Naive thymus-derived CD4-positive, alpha-beta T cell (primary cell): ENCODE measurements at regions of chr11 and their contacts with region 1.

Region 1: GRCh38 chr11:129695575-129696308 is 119.9 kb upstream of the TMEM45B start:
- DNase-seq: peak; percentile 43 to 75 (median 68)
- ATAC-seq: peak; percentile 88
- H3K4me3 ChIP-seq: peak overlapping the region; percentile 72
- H3K4me3 Mint-ChIP-seq: peak overlapping the region; percentile 71 to 89 (median 85)
- H3K27ac ChIP-seq: peak overlapping the region; percentile 58
- H3K27ac Mint-ChIP-seq: peak overlapping the region in 6 of 9 donors; percentile 12 to 83 (median 22)
- H3K4me1 ChIP-seq: peaks cover 0 to 6% of the 10 kb centered on the region in 2 donors
- H3K4me1 Mint-ChIP-seq: peaks cover 0 to 12% (median 5%) of the 10 kb centered on the region in 7 donors
- H3K27me3 ChIP-seq: no peaks in the 10 kb centered on the region
- H3K27me3 Mint-ChIP-seq: peaks cover 0 to 10% (median 5%) of the 10 kb centered on the region in 5 donors

Region 2: GRCh38 chr11:128884703-128885338 is 810.9 kb before region 1 on chr11:
- CTCF ChIA-PET with region 1: no interaction called
- POLR2A ChIA-PET with region 1: no interaction called
- intact Hi-C with region 1: loop called in 1 of 2 experiments (anchors 10 kb)
- DNase-seq: peak in 8 of 9 donors; percentile 41 to 69 (median 60)
- ATAC-seq: peak; percentile 79
- H3K4me3 ChIP-seq: no peak overlapping the region
- H3K4me3 Mint-ChIP-seq: no peak overlapping the region
- H3K27ac ChIP-seq: no peak overlapping the region
- H3K27ac Mint-ChIP-seq: no peak overlapping the region
- H3K4me1 ChIP-seq: no peaks in the 10 kb centered on the region
- H3K4me1 Mint-ChIP-seq: peaks cover 0 to 8% (median 3%) of the 10 kb centered on the region in 7 donors
- H3K27me3 ChIP-seq: peaks cover 7 to 9% of the 10 kb centered on the region in 2 donors
- H3K27me3 Mint-ChIP-seq: peaks cover 54 to 78% (median 73%) of the 10 kb centered on the region in 5 donors

Region 3: DNA sequence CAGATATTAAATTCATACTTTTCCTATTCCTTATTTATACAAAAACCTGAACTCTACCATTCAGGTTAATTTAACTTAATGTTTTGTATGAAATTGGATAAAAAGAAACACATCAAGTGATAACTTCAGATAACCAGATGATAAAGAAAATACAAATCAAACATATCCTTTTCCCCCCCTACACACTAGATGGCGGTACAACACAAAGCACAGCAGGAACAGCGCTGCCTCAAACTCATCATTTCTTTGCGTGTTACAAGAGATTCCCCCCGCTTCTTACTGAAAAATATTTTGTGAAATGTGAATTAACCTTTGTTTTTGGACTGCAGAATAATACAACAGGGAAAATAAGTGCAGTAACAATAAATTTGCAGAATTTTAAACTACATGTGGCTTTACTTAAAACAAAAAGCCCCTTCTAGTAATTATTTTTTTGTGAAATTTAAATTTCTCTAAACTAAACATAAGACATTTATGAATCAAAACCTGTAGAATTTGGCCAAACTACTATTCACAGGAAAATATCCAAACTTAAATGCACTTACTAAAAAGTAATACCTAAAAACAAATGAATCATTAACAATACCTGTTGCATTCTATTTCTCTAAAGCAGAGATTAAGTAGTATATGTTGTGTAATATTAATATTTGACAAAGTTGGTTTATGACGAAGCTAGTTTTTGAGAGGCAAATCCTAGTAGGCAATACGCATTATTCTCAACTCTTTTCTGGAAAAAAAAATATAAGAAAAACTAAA is 578.0 kb before region 1 on chr11:
- CTCF ChIA-PET with region 1: interaction called, 3 read pairs
- POLR2A ChIA-PET with region 1: no interaction called
- intact Hi-C with region 1: loop called (anchors 1 kb)
- DNase-seq: peak in 7 of 9 donors; percentile 38 to 74 (median 62)
- ATAC-seq: peak; percentile 78
- H3K4me3 ChIP-seq: no peak overlapping the region
- H3K4me3 Mint-ChIP-seq: no peak overlapping the region
- H3K27ac ChIP-seq: no peak overlapping the region
- H3K27ac Mint-ChIP-seq: no peak overlapping the region
- H3K4me1 ChIP-seq: no peaks in the 10 kb centered on the region
- H3K4me1 Mint-ChIP-seq: peaks cover 0 to 2% (median 0%) of the 10 kb centered on the region in 7 donors
- H3K27me3 ChIP-seq: no peaks in the 10 kb centered on the region
- H3K27me3 Mint-ChIP-seq: peaks cover 0 to 5% (median 0%) of the 10 kb centered on the region in 5 donors

Region 4: DNA sequence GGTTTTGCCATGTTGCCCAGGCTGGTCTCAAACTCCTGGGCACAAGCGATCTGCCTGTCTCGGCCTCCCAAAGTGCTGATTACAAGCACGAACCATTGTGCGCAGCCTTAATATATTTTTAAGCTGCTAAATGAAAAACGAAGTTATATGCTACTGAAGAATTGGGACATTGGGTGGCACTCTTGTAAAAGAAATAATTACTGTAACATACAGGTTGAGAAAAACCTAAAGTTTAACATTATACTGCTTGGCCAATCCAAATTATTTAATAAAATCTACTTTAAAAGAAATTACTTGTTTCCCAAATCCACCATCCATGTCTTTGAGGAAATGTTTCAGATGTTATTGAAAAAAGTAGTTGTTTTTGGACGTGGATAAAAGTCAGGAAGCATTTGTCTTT is 465.7 kb before region 1 on chr11:
- CTCF ChIA-PET with region 1: interaction called, 3 read pairs
- POLR2A ChIA-PET with region 1: no interaction called
- intact Hi-C with region 1: loop called in 1 of 2 experiments (anchors 1 kb)
- DNase-seq: peak in 3 of 9 donors; percentile 2 to 36 (median 15)
- ATAC-seq: no peak
- H3K4me3 ChIP-seq: no peak overlapping the region
- H3K4me3 Mint-ChIP-seq: no peak overlapping the region
- H3K27ac ChIP-seq: no peak overlapping the region
- H3K27ac Mint-ChIP-seq: no peak overlapping the region
- H3K4me1 ChIP-seq: no peaks in the 10 kb centered on the region
- H3K4me1 Mint-ChIP-seq: no peaks in the 10 kb centered on the region
- H3K27me3 ChIP-seq: no peaks in the 10 kb centered on the region
- H3K27me3 Mint-ChIP-seq: peaks cover 0 to 7% (median 0%) of the 10 kb centered on the region in 5 donors

Region 5: DNA sequence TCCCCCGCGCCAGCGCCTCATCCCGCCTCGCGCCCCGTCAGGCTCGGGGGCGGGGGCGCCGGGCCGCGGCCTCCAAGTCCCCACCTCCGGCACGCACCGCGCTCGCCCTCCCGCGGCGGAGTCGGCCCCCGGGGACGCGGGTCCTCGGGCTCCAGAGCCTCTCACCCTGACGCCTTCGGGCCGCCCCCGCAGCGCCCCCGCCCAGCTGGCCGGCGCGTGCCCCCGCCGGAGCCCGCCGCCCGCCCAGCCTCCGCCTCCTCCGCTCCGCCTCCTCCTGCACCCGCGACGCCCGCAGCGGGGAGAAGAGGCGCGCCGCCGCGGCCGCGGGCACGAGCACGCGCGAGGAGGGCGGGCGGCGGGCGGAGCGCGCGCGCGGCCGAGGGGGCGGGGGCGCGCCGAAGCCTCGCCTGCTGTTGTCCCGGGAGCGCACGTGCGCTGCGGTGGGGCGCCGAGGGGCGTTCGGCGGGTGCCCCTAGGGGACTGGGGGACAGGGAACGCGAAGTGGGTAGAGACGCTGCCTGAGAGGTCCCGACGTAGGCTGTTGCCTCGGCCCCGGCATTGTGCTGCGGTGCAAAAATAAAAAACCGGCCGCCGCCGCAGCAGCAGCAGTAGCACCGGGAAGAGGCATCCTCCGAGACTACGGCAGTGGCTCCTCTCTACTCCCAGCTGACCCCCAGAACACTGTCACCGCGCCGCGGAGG is 416.3 kb before region 1 on chr11:
- CTCF ChIA-PET with region 1: interaction called, 3 read pairs
- POLR2A ChIA-PET with region 1: no interaction called
- intact Hi-C with region 1: loop called in 1 of 2 experiments (anchors 5 kb)
- DNase-seq: peak; percentile 70 to 90 (median 82)
- ATAC-seq: peak; percentile 94
- H3K4me3 ChIP-seq: peak overlapping the region; percentile 58
- H3K4me3 Mint-ChIP-seq: peak overlapping the region; percentile 74 to 91 (median 86)
- H3K27ac ChIP-seq: peak overlapping the region; percentile 49
- H3K27ac Mint-ChIP-seq: peak overlapping the region; percentile 69 to 91 (median 80)
- H3K4me1 ChIP-seq: peaks cover 4 to 6% of the 10 kb centered on the region in 2 donors
- H3K4me1 Mint-ChIP-seq: peaks cover 14 to 43% (median 33%) of the 10 kb centered on the region in 7 donors
- H3K27me3 ChIP-seq: peaks cover 0 to 3% of the 10 kb centered on the region in 2 donors
- H3K27me3 Mint-ChIP-seq: peaks cover 8 to 32% (median 17%) of the 10 kb centered on the region in 5 donors

Region 6: GRCh38 chr11:129375751-129376657 is 319.7 kb before region 1 on chr11 and contains the start of gene BARX2:
- CTCF ChIA-PET with region 1: interaction called, 3 read pairs
- POLR2A ChIA-PET with region 1: no interaction called
- intact Hi-C with region 1: loop called (anchors 1 to 5 kb)
- DNase-seq: peak in 1 of 9 donors; percentile 54
- ATAC-seq: no peak
- H3K4me3 ChIP-seq: no peak within 1 kb of the TSS
- H3K4me3 Mint-ChIP-seq: peak within 1 kb of the TSS; percentile 56 to 86 (median 78)
- H3K27ac ChIP-seq: no peak within 1 kb of the TSS
- H3K27ac Mint-ChIP-seq: peak within 1 kb of the TSS in 1 of 9 donors; percentile 61
- H3K4me1 ChIP-seq: peaks cover 0 to 7% of the 10 kb centered on the region in 2 donors
- H3K4me1 Mint-ChIP-seq: peaks cover 18 to 38% (median 32%) of the 10 kb centered on the region in 7 donors
- H3K27me3 ChIP-seq: peaks cover 0 to 12% of the 10 kb centered on the region in 2 donors
- H3K27me3 Mint-ChIP-seq: peaks cover 75 to 85% (median 79%) of the 10 kb centered on the region in 5 donors
- total RNA-seq, gene BARX2: 0.44 TPM in 1 of 5 experiments, not detected in the others

Region 7: DNA sequence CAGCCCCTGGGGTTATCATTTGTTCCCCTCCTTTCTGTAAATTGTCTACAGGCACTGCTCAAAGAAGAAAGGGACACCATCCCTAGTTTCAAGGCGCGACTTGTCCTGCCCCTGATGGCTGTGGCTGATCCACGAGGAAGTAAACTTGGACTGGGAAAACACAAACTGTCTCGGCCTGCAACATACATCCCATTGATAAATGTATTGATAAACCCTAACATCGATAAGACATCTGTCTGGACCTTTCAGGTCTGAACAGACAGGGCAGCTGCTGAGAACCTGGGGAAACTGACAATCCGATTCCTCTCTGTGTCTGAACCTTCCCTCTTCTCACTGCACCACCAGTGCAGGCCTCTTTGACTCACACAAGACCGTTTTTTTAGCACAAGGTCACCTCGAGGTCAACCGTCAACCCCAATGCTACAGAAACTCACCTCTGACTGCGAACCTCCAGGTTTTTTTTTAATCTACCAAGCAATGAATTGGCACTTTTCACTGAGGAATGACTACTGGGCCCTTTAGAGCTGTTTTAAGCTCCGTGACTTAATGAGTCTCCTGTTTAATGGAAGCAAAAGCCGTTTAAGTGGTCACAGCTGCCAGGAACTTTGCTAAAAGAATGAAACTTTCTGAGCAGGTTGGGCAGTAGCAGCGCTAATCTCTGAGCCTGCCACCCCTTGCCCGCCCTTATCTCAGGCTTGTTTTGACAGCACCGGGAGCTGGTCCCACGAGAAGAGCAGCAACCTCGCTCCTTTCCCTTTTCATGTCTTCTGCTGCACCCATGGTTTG is 83.9 kb before region 1 on chr11:
- CTCF ChIA-PET with region 1: no interaction called
- POLR2A ChIA-PET with region 1: no interaction called
- intact Hi-C with region 1: no loop called
- DNase-seq: no peak
- ATAC-seq: no peak
- H3K4me3 ChIP-seq: no peak overlapping the region
- H3K4me3 Mint-ChIP-seq: no peak overlapping the region
- H3K27ac ChIP-seq: no peak overlapping the region
- H3K27ac Mint-ChIP-seq: no peak overlapping the region
- H3K4me1 ChIP-seq: no peaks in the 10 kb centered on the region
- H3K4me1 Mint-ChIP-seq: no peaks in the 10 kb centered on the region
- H3K27me3 ChIP-seq: no peaks in the 10 kb centered on the region
- H3K27me3 Mint-ChIP-seq: no peaks in the 10 kb centered on the region

Region 8: DNA sequence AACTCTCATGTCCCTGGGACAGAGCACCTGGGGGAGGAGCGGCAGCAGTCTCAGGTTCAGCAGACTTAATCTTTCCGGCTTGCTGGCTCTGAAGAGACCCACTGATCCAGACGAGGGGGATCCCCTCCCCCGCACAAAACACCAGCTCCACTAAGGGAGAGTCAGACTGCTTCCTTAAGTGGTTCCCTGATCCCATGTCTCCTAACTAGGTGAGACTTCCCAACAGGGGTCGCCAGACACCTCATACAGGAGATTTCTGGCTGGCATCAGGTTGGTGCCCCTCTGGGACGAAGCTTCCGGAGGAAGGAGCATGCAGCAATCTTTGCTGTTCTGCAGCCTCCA is 37.2 kb before region 1 on chr11:
- CTCF ChIA-PET with region 1: no interaction called
- POLR2A ChIA-PET with region 1: no interaction called
- intact Hi-C with region 1: no loop called
- DNase-seq: no peak
- ATAC-seq: no peak
- H3K4me3 ChIP-seq: no peak overlapping the region
- H3K4me3 Mint-ChIP-seq: no peak overlapping the region
- H3K27ac ChIP-seq: no peak overlapping the region
- H3K27ac Mint-ChIP-seq: no peak overlapping the region
- H3K4me1 ChIP-seq: no peaks in the 10 kb centered on the region
- H3K4me1 Mint-ChIP-seq: no peaks in the 10 kb centered on the region
- H3K27me3 ChIP-seq: no peaks in the 10 kb centered on the region
- H3K27me3 Mint-ChIP-seq: peaks cover 0 to 9% (median 0%) of the 10 kb centered on the region in 5 donors

Region 9: DNA sequence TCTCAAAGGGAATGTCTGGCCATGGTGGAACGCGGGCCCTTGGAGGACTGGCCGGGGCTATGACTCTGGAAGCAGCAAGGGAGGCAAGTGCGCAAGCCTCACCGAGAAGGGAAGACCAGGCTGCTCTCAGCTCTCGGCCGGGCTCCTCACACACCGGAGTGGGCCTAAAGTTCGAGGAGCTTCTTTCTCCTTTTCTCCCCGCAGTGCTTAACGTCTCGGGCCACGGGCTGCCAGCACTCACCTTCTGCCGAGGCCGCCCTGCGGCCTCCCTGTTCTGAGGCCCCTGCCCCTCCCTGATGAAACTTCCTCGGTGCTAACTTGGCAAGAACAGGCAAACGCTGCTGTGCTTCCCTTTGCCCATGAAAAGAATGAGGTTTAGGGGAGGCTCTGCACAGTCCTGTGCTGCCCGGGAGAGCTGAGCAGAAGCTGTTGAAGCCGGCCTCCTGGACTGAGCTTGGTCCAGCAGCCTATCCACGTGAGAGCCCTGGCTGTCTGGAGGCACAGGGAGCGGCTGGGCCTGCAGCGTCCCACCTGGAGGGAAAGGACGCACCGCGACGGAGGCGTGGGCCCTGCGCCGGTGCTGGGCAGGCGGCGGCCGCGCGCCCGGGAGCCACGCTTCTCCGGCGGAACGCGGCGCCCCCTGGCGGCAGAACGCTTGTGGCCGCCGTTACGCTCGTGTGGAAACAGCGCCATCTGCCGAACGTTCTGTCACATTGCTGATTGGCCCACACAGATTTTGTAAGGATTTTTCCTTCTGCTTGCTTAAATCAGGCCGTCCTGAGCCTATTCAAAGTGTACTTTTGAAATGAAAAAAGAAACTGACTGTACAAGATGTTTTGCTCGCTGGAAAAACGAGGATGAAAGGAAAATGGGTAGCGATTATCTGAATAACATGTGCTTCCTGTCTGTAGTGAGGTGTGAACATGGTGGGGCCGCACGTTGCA is 54.9 kb after region 1 on chr11:
- CTCF ChIA-PET with region 1: no interaction called
- POLR2A ChIA-PET with region 1: interaction called, 3 read pairs
- intact Hi-C with region 1: loop called (anchors 1 to 2 kb)
- DNase-seq: peak; percentile 53 to 89 (median 81)
- ATAC-seq: peak; percentile 97
- H3K4me3 ChIP-seq: peak overlapping the region; percentile 51
- H3K4me3 Mint-ChIP-seq: peak overlapping the region in 9 of 10 donors; percentile 25 to 76 (median 61)
- H3K27ac ChIP-seq: no peak overlapping the region
- H3K27ac Mint-ChIP-seq: peak overlapping the region in 1 of 9 donors; percentile 48
- H3K4me1 ChIP-seq: peaks cover 2 to 5% of the 10 kb centered on the region in 2 donors
- H3K4me1 Mint-ChIP-seq: peaks cover 0 to 9% (median 3%) of the 10 kb centered on the region in 7 donors
- H3K27me3 ChIP-seq: no peaks in the 10 kb centered on the region
- H3K27me3 Mint-ChIP-seq: peaks cover 0 to 19% (median 0%) of the 10 kb centered on the region in 5 donors

Region 10: DNA sequence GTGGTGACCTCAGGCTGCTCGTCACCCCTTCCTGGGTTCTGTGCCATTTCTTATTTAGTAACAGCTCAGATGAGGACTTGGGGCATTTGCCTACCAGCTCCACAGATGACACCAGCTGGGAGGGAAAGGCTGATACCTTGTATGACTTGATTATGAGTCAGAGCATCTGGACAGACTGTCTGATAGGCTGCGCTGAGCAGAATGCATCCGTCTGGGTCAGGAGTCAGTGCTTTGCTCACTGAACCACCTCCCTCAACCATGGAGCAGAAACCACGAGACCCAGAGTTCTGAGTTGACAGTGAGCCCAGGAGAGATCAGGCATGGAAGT is 470.7 kb after region 1 on chr11:
- CTCF ChIA-PET with region 1: no interaction called
- POLR2A ChIA-PET with region 1: no interaction called
- intact Hi-C with region 1: no loop called
- DNase-seq: no peak
- ATAC-seq: peak; percentile 48
- H3K4me3 ChIP-seq: no peak overlapping the region
- H3K4me3 Mint-ChIP-seq: no peak overlapping the region
- H3K27ac ChIP-seq: no peak overlapping the region
- H3K27ac Mint-ChIP-seq: no peak overlapping the region
- H3K4me1 ChIP-seq: no peaks in the 10 kb centered on the region
- H3K4me1 Mint-ChIP-seq: peaks cover 0 to 6% (median 4%) of the 10 kb centered on the region in 7 donors
- H3K27me3 ChIP-seq: peaks cover 0 to 5% of the 10 kb centered on the region in 2 donors
- H3K27me3 Mint-ChIP-seq: peaks cover 36 to 60% (median 56%) of the 10 kb centered on the region in 5 donors